ENCODE measurements at regions of chr19 and their contacts with region 1.

Region 1: GRCh38 chr19:46542428-46543230 is 47.0 kb upstream of the PNMA8B start:
- DNase-seq: peak; percentile 87
- H3K4me3 Mint-ChIP-seq: no peak overlapping the region
- H3K27ac Mint-ChIP-seq: no peak overlapping the region
- H3K4me1 Mint-ChIP-seq: peaks cover 11% of the 10 kb centered on the region
- H3K27me3 Mint-ChIP-seq: peaks cover 29% of the 10 kb centered on the region

Region 2: DNA sequence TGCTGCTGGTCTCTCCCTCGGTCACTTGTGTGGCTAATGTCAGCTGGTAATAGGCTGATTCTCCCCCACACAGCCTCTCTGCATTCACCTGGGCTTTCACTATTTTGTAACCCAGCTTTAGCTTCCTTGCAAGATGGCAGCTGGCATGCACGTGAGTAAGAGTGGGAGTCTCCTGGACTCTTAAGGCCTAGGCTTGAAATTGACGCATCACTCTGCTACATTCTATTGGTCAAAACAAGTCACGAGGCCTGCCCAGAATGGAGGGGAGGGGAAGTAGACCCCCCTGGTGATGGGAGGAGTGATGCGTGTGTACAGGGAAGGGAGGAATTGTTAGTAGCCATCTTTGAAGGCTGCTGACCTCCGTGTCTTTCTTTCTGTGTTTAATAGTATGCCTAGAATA is 22.0 kb before region 1 on chr19:
- CTCF ChIA-PET with region 1: interaction called, 66 read pairs
- DNase-seq: no peak
- H3K4me3 Mint-ChIP-seq: no peak overlapping the region
- H3K27ac Mint-ChIP-seq: peak overlapping the region; percentile 53
- H3K4me1 Mint-ChIP-seq: peaks cover 74% of the 10 kb centered on the region
- H3K27me3 Mint-ChIP-seq: peaks cover 5% of the 10 kb centered on the region

Region 3: DNA sequence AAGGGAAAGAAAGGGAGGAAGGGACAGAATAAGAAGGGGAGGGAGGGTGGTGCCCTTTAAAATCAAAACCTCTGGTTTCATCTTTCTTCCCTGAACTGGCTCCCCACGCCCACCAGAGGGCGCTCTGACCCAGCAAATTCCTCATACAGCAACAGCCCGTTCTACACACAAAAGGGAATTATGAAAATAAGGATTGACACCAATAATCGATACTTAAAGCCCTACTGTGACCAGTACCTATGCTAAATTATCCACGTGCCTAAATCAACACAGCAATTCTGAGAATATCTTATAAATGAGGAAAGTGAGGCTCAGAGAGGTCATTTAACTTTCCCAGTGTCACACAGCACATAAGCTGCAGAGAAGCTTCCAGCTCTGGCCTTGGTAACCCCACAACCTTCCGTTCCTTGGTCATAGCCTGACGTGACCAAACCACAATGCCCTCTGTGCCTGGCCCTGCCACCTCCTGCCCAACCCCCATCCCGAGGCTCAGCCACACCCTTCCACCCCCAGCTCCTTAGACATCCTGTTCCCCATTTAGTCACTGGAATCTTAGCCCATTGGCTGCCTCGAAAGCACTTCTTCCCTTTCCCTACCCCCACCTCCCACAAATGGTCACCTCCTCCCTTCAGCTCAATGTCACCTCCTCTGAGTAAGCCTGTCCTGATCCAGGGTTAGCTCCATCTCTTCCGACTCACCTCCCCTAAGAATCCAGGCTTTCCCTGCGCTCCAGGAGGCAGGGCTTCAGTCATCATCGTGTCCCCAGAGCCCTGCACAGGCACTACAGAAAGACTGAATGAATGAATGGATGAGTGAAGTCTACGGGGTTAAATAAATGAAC is 12.8 kb before region 1 on chr19:
- CTCF ChIA-PET with region 1: interaction called, 33 read pairs
- DNase-seq: peak; percentile 83
- H3K4me3 Mint-ChIP-seq: no peak overlapping the region
- H3K27ac Mint-ChIP-seq: peak overlapping the region; percentile 31
- H3K4me1 Mint-ChIP-seq: peaks cover 22% of the 10 kb centered on the region
- H3K27me3 Mint-ChIP-seq: peaks cover 38% of the 10 kb centered on the region

Region 4: DNA sequence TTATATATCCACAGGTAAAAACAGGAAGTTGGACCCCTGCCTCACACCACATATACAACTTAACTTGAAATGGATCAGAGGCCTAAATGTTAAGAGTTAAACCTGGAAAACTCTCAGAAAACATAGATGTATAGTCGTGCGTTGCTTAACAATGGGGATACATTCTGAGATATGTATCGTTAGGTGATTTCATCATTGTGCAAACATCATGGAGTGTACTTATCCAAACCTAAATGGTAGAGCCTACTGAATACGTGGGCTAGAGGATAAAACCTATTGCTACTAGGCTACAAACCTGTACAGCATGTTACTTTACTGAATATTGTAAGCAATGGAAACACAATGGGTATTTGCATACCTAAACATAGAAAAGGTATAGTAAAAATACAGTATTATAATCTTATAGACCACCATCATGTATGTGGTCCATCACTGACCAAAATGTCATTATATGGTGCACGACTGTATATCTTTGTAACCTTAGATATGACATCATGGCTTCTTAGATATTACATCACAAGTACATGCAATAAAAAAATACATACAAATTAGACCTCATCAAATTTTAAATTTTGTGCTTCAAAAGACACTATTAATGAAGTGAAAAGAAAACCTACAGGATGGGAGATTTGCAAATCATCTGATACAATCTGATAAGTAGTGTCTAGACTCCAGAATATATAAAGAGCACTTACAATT is 43.8 kb after region 1 on chr19:
- CTCF ChIA-PET with region 1: no interaction called
- DNase-seq: no peak
- H3K4me3 Mint-ChIP-seq: no peak overlapping the region
- H3K27ac Mint-ChIP-seq: no peak overlapping the region
- H3K4me1 Mint-ChIP-seq: peaks cover 4% of the 10 kb centered on the region
- H3K27me3 Mint-ChIP-seq: peaks cover 21% of the 10 kb centered on the region

Measured in activated naive CD4-positive, alpha-beta T cell treated with anti-CD3 and anti-CD28 coated beads, Interleukin-2, amount 10 ng/mL, durations not matched to agents 7 days and 5 days (primary cell).